ENCODE measurements at regions of chr7 and their contacts with region 1.

Region 1: GRCh38 chr7:131753620-131754222 is 197.3 kb upstream of the PODXL start:
- DNase-seq: peak; percentile 50
- H3K4me3 ChIP-seq: no peak overlapping the region
- H3K27ac ChIP-seq: no peak overlapping the region
- H3K4me1 ChIP-seq: no peaks in the 10 kb centered on the region
- H3K27me3 ChIP-seq: peaks cover 65% of the 10 kb centered on the region
- CTCF ChIP-seq: peak; percentile 57

Region 2: GRCh38 chr7:132895231-132895630 is 1141.5 kb after region 1 on chr7:
- CTCF ChIA-PET with region 1: no interaction called
- POLR2A ChIA-PET with region 1: interaction called, 19 read pairs
- intact Hi-C with region 1: no loop called
- DNase-seq: no peak
- H3K4me3 ChIP-seq: no peak overlapping the region
- H3K27ac ChIP-seq: no peak overlapping the region
- H3K4me1 ChIP-seq: no peaks in the 10 kb centered on the region
- H3K27me3 ChIP-seq: no peaks in the 10 kb centered on the region
- CTCF ChIP-seq: no peak

Measured in A673 (cell line).